ENCODE measurements at regions of chr1 and their contacts with region 1.

Region 1: DNA sequence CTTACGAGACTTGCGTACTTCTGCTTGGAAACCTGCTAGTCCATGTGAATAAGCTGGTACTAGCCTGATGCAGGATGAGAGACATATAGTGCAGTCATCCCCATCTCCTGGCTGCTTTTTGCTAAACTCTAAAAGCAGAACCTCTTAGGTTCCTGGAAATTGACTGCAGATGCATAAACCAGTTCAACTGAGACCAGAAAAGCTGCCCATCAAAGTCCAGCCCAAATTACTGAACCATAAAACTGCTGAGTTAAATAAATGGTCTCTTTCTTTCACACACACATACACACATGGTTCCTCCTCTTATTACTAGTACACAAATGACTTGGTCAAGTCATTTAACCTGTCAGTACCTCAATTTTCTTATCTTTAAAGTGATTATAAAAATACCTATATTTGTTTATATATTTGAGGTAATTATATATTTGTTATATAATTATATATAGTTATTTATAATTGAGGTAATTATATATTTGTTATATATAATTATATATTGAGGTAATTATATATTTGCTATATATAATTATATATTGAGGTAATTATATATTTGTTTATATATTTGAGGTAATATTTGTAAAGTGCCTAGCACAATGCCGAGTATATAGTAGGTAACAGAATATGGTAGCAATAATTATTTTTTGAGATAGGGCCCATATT is 25.2 kb upstream of the RABGAP1L start:
- DNase-seq: peak; percentile 77
- H3K4me3 ChIP-seq: no peak overlapping the region
- H3K27ac ChIP-seq: no peak overlapping the region
- H3K4me1 ChIP-seq: peaks cover 23% of the 10 kb centered on the region
- CTCF ChIP-seq: no peak

Region 2: GRCh38 chr1:174428033-174428432 is 293.9 kb after region 1 on chr1:
- CTCF ChIA-PET with region 1: no interaction called
- POLR2A ChIA-PET with region 1: interaction called, 10 read pairs
- intact Hi-C with region 1: no loop called
- DNase-seq: no peak
- H3K4me3 ChIP-seq: no peak overlapping the region
- H3K27ac ChIP-seq: no peak overlapping the region
- H3K4me1 ChIP-seq: no peaks in the 10 kb centered on the region
- CTCF ChIP-seq: no peak